ENCODE measurements at regions of chr10 and their contacts with region 1.

Region 1: GRCh38 chr10:123043409-123043925 is 34.7 kb downstream of the ACADSB start:
- DNase-seq: peak; percentile 67
- ATAC-seq: peak; percentile 94
- H3K4me3 ChIP-seq: no peak overlapping the region
- H3K27ac ChIP-seq: no peak overlapping the region
- H3K4me1 ChIP-seq: no peaks in the 10 kb centered on the region
- H3K27me3 ChIP-seq: no peaks in the 10 kb centered on the region
- CTCF ChIP-seq: peak; percentile 69
- POLR2A ChIP-seq: no peak
- RAD21 ChIP-seq: peak; percentile 77

Region 2: DNA sequence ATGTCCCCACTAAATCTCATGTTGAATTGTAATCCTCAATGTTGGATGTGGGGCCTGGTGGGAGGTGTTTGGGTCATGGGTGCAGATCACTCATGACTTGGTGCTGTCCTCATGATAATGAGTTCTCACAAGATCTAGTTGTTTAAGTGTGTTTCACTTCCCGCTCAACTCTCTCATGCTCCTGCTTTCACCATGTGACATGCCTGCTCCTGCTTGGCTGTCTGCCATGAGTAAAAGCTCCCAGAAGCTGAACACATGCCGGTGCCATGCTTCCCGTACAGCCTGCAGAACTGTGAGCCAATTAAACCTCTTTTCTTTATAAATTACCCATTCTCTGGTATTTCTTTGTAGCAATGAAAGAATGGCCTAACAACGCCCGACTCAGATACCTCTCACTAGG is 69.4 kb before region 1 on chr10:
- CTCF ChIA-PET with region 1: no interaction called
- POLR2A ChIA-PET with region 1: no interaction called
- dilution Hi-C with region 1: no loop called
- in situ Hi-C with region 1: no loop called
- intact Hi-C with region 1: no loop called
- DNase-seq: peak; percentile 7
- ATAC-seq: no peak
- H3K4me3 ChIP-seq: no peak overlapping the region
- H3K27ac ChIP-seq: no peak overlapping the region
- H3K4me1 ChIP-seq: no peaks in the 10 kb centered on the region
- H3K27me3 ChIP-seq: no peaks in the 10 kb centered on the region
- CTCF ChIP-seq: no peak
- POLR2A ChIP-seq: no peak
- RAD21 ChIP-seq: no peak

Region 3: DNA sequence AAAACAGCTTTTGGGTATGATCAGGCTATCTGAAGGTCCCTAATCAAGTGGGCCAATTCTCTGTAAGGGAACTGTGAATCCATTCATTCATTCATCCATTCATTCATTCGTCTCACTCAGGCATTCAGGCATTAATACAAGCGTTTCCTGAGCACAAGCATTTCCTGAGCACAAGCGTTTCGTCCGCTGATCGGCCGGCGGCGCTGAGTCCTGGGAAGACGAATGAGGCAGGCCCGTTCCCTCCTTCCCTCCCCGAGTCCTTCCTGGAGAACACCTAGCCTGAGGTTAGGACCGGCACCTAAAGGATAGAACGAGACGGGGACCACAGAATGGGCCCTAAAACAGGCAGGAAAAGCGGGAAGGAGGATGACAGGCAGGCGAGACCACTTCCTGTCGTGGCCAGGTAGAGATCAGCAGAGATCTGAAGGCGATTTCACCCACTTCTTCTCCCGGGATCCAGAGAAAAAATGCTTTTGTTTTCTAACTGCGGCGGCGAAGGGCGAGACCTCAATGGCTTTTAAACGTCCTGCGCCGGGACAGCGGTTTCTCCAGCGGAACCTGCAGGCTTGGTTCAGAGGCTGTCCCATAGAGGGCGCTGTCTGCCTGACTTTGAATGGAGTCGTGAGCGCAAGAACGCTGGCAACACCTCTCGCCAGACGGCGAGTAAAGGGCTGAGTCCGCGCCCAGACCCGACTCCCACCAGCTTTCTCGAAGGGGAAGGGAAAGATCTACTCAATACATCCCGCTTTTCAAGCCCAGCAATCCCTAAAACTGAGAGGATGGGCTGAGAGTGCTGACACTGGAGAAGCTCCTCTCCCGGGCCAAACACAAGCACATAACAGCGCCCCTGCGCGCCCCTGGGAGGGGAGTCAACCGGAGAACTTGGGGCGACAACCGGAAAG is 89.4 kb after region 1 on chr10:
- CTCF ChIA-PET with region 1: no interaction called
- POLR2A ChIA-PET with region 1: no interaction called
- dilution Hi-C with region 1: no loop called
- in situ Hi-C with region 1: no loop called
- intact Hi-C with region 1: loop called (anchors 2 kb)
- DNase-seq: peak; percentile 76
- ATAC-seq: peak; percentile 87
- H3K4me3 ChIP-seq: peak overlapping the region; percentile 16; the same call in 1 of the 2 replicates
- H3K27ac ChIP-seq: no peak overlapping the region
- H3K4me1 ChIP-seq: peaks cover 2% of the 10 kb centered on the region; the same call in 1 of the 2 replicates
- H3K27me3 ChIP-seq: peaks cover 70% of the 10 kb centered on the region
- CTCF ChIP-seq: peak; percentile 90
- POLR2A ChIP-seq: 0 out of 2 replicates have a peak, but pooled peaks have one; percentile 25
- RAD21 ChIP-seq: peak; percentile 86

Region 4: DNA sequence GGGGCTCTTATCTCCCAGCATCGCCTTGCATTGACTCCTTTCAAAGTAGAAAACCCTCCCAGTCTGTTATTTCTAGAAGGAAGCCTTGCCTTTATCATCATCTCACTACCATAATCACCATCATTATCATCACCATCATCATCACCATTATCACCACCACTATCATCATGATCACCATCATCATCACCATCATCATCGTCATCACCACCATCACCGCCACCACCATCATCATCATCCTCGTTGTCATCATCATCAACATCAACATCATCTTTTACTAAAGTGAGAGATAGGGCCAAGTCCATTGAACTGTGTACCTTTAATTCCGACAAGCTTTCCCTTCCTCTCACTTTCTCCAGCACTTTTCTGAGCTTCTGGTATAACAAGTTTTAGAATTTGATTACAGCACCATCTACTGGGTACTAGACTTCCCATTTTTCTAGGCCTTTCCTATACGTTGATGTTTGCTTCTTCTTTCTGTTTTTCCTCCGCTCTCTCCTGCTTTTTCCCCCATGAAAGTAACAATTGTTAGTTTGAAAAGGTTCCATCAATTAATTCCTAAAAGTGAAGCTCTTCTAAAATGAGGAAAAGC is 337.1 kb after region 1 on chr10:
- CTCF ChIA-PET with region 1: no interaction called
- POLR2A ChIA-PET with region 1: no interaction called
- dilution Hi-C with region 1: no loop called
- in situ Hi-C with region 1: no loop called
- intact Hi-C with region 1: loop called (anchors 2 kb)
- DNase-seq: no peak
- ATAC-seq: no peak
- H3K4me3 ChIP-seq: no peak overlapping the region
- H3K27ac ChIP-seq: no peak overlapping the region
- H3K4me1 ChIP-seq: no peaks in the 10 kb centered on the region
- H3K27me3 ChIP-seq: no peaks in the 10 kb centered on the region
- CTCF ChIP-seq: 0 out of 2 replicates have a peak, but pooled peaks have one; percentile 22
- POLR2A ChIP-seq: no peak
- RAD21 ChIP-seq: 0 out of 2 replicates have a peak, but pooled peaks have one; percentile 11

Region 5: DNA sequence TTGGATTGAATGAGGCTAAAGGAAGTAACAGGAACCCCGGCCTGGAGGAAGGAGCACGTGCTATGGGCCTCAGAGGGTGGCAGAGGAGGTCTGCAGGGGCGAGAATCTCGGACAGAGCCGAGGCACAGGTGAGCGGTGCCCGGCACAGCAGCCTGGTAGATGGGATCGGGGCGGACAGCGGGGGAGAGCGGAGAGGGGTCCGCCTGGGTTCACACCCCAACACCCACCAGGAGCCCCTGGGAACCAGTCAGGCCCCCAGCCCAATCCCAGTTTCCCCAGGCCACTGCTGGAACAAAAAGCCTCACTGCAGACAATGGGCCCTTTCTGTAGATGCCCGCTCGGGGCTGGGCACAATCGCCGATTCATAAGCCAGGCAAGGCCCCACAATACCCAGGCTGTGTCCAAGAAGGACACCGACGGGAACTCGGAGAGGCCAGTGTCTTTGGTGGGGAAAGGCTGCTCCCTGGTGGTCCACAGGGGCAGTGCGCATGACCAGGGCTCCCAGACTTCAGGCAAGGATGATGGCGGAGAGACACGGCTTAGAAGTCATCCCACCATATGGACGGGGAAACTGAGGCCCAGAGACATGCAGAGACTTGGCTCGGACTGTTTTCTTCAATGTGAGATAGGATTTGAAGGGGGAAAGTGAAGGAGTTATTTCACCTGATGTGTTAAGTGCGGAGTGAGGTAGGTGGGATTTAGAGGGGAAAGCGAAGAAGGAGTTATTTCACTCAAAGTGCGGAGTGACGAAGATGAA is 515.8 kb after region 1 on chr10:
- CTCF ChIA-PET with region 1: interaction called, 4 read pairs
- POLR2A ChIA-PET with region 1: no interaction called
- dilution Hi-C with region 1: no loop called
- in situ Hi-C with region 1: loop called (anchors 10 kb)
- intact Hi-C with region 1: loop called (anchors 1 kb)
- DNase-seq: peak; percentile 31
- ATAC-seq: peak; percentile 98
- H3K4me3 ChIP-seq: no peak overlapping the region
- H3K27ac ChIP-seq: no peak overlapping the region
- H3K4me1 ChIP-seq: no peaks in the 10 kb centered on the region
- H3K27me3 ChIP-seq: no peaks in the 10 kb centered on the region
- CTCF ChIP-seq: peak; percentile 94
- POLR2A ChIP-seq: no peak; the same call in 1 of the 2 replicates
- RAD21 ChIP-seq: peak; percentile 94

Region 6: DNA sequence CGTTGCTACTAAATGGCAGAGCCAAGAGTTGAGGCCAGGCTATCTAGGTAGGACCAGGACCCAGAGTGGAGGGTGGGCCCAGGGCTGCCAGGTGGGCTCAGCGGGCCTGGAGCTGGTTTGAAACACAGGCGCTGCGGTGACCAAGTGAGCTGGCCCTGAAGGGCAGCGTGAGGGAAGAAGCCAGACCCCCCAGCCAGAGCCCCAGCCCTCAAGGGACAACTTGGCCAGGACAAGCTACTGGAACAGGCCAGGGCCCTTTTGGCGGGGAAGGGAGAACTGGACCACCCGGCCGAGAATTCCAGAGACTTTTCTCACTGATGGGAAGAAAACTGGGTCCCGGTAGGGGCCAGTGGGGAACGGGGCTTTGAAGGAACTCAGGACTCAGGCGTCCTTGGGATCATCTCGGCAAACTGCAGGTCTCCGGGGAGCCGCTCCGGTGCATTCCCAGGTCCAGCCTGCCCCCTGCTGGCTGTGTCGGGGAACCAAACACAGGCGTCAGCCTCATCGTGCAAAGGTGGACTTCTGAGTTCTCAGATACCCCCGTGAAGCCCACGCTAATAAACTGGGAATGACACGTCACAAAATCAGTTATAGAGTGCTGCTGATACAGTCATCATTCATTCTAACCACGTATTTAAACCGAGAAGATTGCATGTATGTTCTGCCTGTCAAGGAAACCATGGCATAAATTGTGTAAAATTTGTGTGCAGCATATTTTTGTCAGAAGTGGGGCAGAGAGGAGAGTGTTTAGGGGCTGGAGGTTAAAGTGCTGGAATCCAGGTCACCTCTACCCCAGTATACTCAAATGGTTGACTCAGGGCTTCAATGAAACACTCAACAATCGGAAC is 924.2 kb after region 1 on chr10:
- CTCF ChIA-PET with region 1: no interaction called
- POLR2A ChIA-PET with region 1: no interaction called
- dilution Hi-C with region 1: no loop called
- in situ Hi-C with region 1: loop called (anchors 25 kb)
- intact Hi-C with region 1: no loop called
- DNase-seq: peak; percentile 11
- ATAC-seq: peak; percentile 65
- H3K4me3 ChIP-seq: no peak overlapping the region
- H3K27ac ChIP-seq: no peak overlapping the region
- H3K4me1 ChIP-seq: no peaks in the 10 kb centered on the region
- H3K27me3 ChIP-seq: no peaks in the 10 kb centered on the region
- CTCF ChIP-seq: peak; percentile 53
- POLR2A ChIP-seq: no peak
- RAD21 ChIP-seq: peak; percentile 63

Region 7: DNA sequence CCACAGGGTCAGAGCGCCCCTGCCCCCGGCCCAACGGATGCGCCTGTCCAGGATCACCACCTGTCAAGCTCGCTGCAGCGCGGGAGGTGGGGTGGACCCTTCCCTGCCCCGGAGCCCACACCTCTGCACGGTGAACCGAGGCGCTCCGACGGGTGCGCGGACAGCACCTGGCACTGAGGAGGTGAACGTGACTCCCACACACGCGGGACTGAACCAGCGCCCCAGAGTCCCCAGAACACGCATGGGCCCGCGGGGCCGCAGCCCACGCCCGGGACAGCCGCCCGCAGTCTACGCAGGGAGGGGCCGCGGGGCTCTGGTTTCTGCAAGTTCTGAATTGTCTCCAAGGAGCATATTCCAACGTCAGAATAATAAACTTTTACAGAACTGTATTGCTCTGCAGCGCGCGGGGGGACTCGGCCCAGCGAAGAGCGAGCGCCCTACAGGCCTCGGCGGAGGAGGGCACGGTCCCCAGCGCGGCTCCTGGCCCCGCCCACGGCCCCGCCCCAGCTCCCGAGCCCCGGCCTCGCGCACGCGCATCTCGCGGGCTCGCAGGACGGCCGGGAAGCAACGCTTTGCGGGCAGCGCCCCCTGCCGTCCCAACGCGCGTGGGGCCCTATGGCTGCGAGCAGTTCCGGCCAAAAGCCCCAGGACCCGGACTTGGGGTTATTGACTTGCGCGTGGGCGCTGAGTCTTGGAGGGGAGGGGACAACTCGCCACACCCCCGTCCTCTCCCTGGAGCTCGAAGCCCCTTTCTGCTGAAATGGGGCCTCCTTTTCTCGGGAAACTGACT is 1345.6 kb after region 1 on chr10:
- CTCF ChIA-PET with region 1: no interaction called
- POLR2A ChIA-PET with region 1: no interaction called
- dilution Hi-C with region 1: no loop called
- in situ Hi-C with region 1: no loop called
- intact Hi-C with region 1: loop called (anchors 5 kb)
- DNase-seq: peak; percentile 71
- ATAC-seq: peak; percentile 99
- H3K4me3 ChIP-seq: peak overlapping the region; percentile 26; the same call in 1 of the 2 replicates
- H3K27ac ChIP-seq: no peak overlapping the region
- H3K4me1 ChIP-seq: no peaks in the 10 kb centered on the region
- H3K27me3 ChIP-seq: no peaks in the 10 kb centered on the region; the same call in 1 of the 2 replicates
- CTCF ChIP-seq: peak; percentile 97
- POLR2A ChIP-seq: no peak
- RAD21 ChIP-seq: peak; percentile 92

Measured in IMR-90 (cell line).